AG04450 (cell line): ENCODE measurements at regions of chr2 and their contacts with region 1.

Region 1: GRCh38 chr2:176565641-176566323 is 296.5 kb downstream of the MTX2 start:
- DNase-seq: no peak
- H3K4me3 ChIP-seq: no peak overlapping the region
- H3K27ac ChIP-seq: peak overlapping the region; percentile 39
- H3K27me3 ChIP-seq: no peaks in the 10 kb centered on the region
- CTCF ChIP-seq: no peak

Region 2: GRCh38 chr2:176638167-176639015 is 72.6 kb after region 1 on chr2:
- CTCF ChIA-PET with region 1: interaction called, 15 read pairs
- POLR2A ChIA-PET with region 1: no interaction called
- DNase-seq: peak; percentile 6
- H3K4me3 ChIP-seq: peak overlapping the region; percentile 63
- H3K27ac ChIP-seq: no peak overlapping the region
- H3K27me3 ChIP-seq: peaks cover 4% of the 10 kb centered on the region
- CTCF ChIP-seq: peak; percentile 69

Region 3: GRCh38 chr2:177239932-177240630 is 674.3 kb after region 1 on chr2:
- CTCF ChIA-PET with region 1: no interaction called
- POLR2A ChIA-PET with region 1: interaction called, 11 read pairs
- DNase-seq: no peak
- H3K4me3 ChIP-seq: no peak overlapping the region
- H3K27ac ChIP-seq: no peak overlapping the region
- H3K27me3 ChIP-seq: no peaks in the 10 kb centered on the region
- CTCF ChIP-seq: no peak

Region 4: GRCh38 chr2:177392373-177393202 is 826.8 kb after region 1 on chr2 and contains the start of gene AGPS:
- CTCF ChIA-PET with region 1: no interaction called
- POLR2A ChIA-PET with region 1: no interaction called
- DNase-seq: no peak
- H3K4me3 ChIP-seq: peak within 1 kb of the TSS; percentile 78
- H3K27ac ChIP-seq: no peak within 1 kb of the TSS
- H3K27me3 ChIP-seq: no peaks in the 10 kb centered on the region
- CTCF ChIP-seq: 0 out of 2 replicates have a peak, but pooled peaks have one; percentile 1
- polyA plus RNA-seq, gene AGPS: 15.1 and 22.6 TPM in 2 replicates